ENCODE measurements at regions of chr4 and their contacts with region 1.

Region 1: GRCh38 chr4:139651282-139652194 is 14.1 kb upstream of the MGST2 start:
- DNase-seq: peak; percentile 42 to 75 (median 55)
- H3K4me3 ChIP-seq: no peak overlapping the region
- H3K4me3 Mint-ChIP-seq: peak overlapping the region in 1 of 7 donors; percentile 10
- H3K27ac ChIP-seq: no peak overlapping the region
- H3K27ac Mint-ChIP-seq: no peak overlapping the region
- H3K4me1 ChIP-seq: peaks cover 6% of the 10 kb centered on the region
- H3K4me1 Mint-ChIP-seq: peaks cover 3 to 6% (median 5%) of the 10 kb centered on the region in 3 donors
- H3K27me3 ChIP-seq: no peaks in the 10 kb centered on the region
- H3K27me3 Mint-ChIP-seq: peaks cover 0 to 9% of the 10 kb centered on the region in 2 donors

Region 2: GRCh38 chr4:139374251-139374650 is 277.3 kb before region 1 on chr4:
- CTCF ChIA-PET with region 1: no interaction called
- POLR2A ChIA-PET with region 1: no interaction called
- DNase-seq: no peak
- H3K4me3 ChIP-seq: no peak overlapping the region
- H3K4me3 Mint-ChIP-seq: no peak overlapping the region
- H3K27ac ChIP-seq: no peak overlapping the region
- H3K27ac Mint-ChIP-seq: no peak overlapping the region
- H3K4me1 ChIP-seq: no peaks in the 10 kb centered on the region
- H3K4me1 Mint-ChIP-seq: peaks cover 0 to 4% (median 0%) of the 10 kb centered on the region in 3 donors
- H3K27me3 ChIP-seq: no peaks in the 10 kb centered on the region
- H3K27me3 Mint-ChIP-seq: no peaks in the 10 kb centered on the region

Region 3: DNA sequence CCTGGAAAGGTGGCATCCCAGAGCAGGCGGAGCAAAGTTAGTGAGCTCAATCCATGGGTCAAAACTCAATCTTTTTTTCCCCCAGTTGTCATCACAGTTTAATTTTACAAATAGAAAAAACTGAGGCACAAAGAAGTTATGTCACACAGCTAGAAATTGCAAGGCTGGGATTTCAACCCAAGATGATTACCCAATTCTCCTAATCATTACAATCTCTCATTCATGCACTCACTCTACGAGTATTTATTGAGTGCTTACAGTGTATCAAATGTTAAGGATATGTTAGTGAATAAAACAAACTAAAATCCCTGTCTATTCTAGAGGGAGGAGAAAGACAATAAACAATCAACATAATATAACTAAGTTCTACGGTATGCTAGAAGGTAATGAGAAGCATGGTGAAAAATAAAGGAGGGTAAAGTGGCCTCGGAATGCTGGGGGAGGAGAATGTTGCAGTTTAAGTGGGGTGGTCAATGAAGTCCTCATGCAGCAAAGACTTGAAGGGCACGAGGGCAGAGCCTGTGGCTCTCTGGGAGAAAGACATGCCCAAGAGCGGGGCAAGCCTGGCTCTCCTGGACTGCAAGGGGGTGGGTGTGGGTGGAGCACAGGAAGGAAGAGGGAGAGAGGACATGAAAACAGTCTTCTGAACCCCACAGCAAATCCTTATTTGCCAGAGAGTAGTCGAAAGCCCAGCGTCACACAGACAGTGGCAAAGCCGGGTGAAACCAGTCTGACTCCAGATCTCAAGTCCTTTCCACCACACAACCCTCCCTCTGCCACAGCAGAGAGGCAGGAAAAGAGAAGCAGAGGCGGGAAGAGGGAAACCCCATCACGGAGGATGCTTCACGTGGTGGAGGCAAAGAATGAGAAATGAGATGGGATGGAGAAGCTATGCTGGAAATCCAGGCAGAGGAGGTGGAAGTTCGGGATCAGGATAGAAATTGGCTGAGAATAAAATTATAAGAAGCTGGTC is 149.3 kb before region 1 on chr4:
- CTCF ChIA-PET with region 1: interaction called, 10 read pairs
- POLR2A ChIA-PET with region 1: no interaction called
- DNase-seq: no peak
- H3K4me3 ChIP-seq: no peak overlapping the region
- H3K4me3 Mint-ChIP-seq: no peak overlapping the region
- H3K27ac ChIP-seq: no peak overlapping the region
- H3K27ac Mint-ChIP-seq: peak overlapping the region in 1 of 8 donors; percentile 5
- H3K4me1 ChIP-seq: no peaks in the 10 kb centered on the region
- H3K4me1 Mint-ChIP-seq: peaks cover 0 to 4% (median 3%) of the 10 kb centered on the region in 3 donors
- H3K27me3 ChIP-seq: no peaks in the 10 kb centered on the region
- H3K27me3 Mint-ChIP-seq: peaks cover 0 to 9% of the 10 kb centered on the region in 2 donors

Region 4: DNA sequence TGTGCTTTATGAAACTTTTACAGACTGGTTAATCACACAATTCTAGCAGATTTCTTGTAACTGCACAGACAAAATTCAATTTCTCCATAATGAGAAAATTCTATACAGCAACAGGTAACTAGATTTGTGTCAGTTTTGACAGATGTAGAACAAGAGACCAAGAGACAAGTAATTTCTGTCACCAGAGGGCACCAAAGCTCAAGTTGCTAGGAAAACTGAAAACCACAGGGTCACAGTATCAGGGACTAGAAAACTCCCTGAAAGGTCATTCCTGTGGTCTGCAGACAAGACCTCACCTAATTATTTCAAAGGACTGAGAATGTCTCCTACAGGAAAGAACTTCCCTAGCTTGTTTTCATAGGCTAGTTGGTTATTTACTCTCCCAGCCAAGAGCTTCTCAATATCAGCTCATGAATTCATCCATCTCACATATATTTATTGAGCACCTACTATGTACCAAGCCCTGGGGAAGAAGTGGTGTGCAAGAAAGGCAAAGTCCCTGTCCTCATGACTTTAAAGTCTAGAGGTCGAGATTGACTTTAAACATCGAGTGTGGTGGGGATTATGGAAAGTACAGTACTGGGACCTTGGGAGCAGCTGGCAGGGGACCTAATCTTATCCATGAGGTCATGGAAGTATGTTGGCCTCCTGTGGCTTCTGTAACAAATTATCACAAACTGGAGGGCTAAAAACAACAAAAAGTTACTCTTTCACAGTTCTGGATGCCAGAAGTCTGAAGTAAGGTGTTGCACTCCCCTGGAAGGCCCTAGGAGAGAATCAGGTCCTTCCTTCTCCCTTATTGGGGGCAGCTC is 47.8 kb before region 1 on chr4:
- CTCF ChIA-PET with region 1: interaction called, 22 read pairs
- POLR2A ChIA-PET with region 1: no interaction called
- DNase-seq: peak in 3 of 5 donors; percentile 4 to 23 (median 10)
- H3K4me3 ChIP-seq: no peak overlapping the region
- H3K4me3 Mint-ChIP-seq: no peak overlapping the region
- H3K27ac ChIP-seq: no peak overlapping the region
- H3K27ac Mint-ChIP-seq: peak overlapping the region in 1 of 8 donors; percentile 5
- H3K4me1 ChIP-seq: peaks cover 4% of the 10 kb centered on the region
- H3K4me1 Mint-ChIP-seq: peaks cover 12 to 15% (median 15%) of the 10 kb centered on the region in 3 donors
- H3K27me3 ChIP-seq: no peaks in the 10 kb centered on the region
- H3K27me3 Mint-ChIP-seq: peaks cover 14 to 26% of the 10 kb centered on the region in 2 donors

Measured in CD8-positive, alpha-beta memory T cell (primary cell).